Posterior vena cava (tissue), 2 donors: ENCODE measurements at regions of chr2 and their contacts with region 1.

Region 1: DNA sequence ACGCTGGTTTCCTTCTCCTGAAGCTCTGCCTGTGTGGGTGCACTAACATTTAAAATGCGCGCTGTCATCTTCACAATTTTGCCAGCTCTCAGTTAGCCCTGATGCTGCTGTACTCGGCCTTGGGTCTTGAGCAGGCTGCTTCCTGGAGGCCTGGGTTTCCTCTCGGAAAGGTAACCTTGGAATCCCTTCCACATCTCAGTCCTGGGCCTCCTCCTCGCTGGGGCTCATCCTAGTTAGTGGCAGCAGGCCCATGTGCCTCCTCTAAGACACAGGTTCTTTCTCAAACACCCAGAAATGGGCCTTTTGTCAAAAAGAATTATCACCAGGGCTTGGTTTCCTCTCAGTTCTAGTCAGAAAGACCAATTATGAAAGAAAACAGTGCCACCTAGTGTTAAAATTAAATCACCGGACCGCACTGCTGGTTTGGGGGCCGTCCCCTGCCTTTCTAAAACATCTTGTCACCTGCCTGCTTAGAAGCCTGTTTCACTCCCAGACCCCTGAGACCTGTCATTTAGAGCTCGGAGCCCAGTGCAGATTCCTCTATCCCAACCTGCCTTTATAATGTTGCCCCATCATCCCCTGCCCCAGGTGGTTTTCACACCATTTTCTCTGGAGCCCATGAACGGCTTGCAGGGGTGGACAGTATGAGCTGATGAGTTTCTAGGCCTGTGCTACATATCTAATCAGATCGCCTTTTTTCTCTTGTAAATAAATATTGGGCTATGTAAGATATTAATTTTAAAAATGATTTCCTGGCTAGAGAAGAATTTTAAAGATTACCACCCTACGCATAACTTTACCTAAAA is 42.4 kb downstream of the HK2 start:
- DNase-seq: no peak

Region 2: GRCh38 chr2:74690571-74690970 is 185.7 kb before region 1 on chr2:
- intact Hi-C with region 1: loop called (anchors 2 to 5 kb)
- DNase-seq: no peak

Region 3: GRCh38 chr2:74715078-74715791 is 161.0 kb before region 1 on chr2:
- intact Hi-C with region 1: loop called (anchors 5 kb)
- DNase-seq: peak; percentile 94

Region 4: GRCh38 chr2:74843898-74844297 is 32.4 kb before region 1 on chr2:
- intact Hi-C with region 1: loop called in 1 of 2 experiments (anchors 5 kb)
- DNase-seq: no peak